Naive thymus-derived CD4-positive, alpha-beta T cell (primary cell): ENCODE measurements at regions of chr12 and their contacts with region 1.

Region 1: GRCh38 chr12:92987362-92987761 is 58.3 kb upstream of the EEA1 start:
- DNase-seq: peak in 7 of 9 donors; percentile 41 to 66 (median 56)
- ATAC-seq: peak; percentile 81
- H3K4me3 ChIP-seq: no peak overlapping the region
- H3K4me3 Mint-ChIP-seq: peak overlapping the region in 9 of 10 donors; percentile 18 to 80 (median 65)
- H3K27ac ChIP-seq: no peak overlapping the region
- H3K27ac Mint-ChIP-seq: peak overlapping the region in 5 of 9 donors; percentile 35 to 68 (median 59)
- H3K4me1 ChIP-seq: peaks cover 0 to 8% of the 10 kb centered on the region in 2 donors
- H3K4me1 Mint-ChIP-seq: peaks cover 5 to 13% (median 12%) of the 10 kb centered on the region in 7 donors
- H3K27me3 ChIP-seq: no peaks in the 10 kb centered on the region
- H3K27me3 Mint-ChIP-seq: peaks cover 0 to 5% (median 0%) of the 10 kb centered on the region in 5 donors

Region 2: GRCh38 chr12:92469837-92470236 is 517.5 kb before region 1 on chr12:
- CTCF ChIA-PET with region 1: no interaction called
- POLR2A ChIA-PET with region 1: no interaction called
- intact Hi-C with region 1: no loop called
- DNase-seq: no peak
- ATAC-seq: no peak
- H3K4me3 ChIP-seq: no peak overlapping the region
- H3K4me3 Mint-ChIP-seq: no peak overlapping the region
- H3K27ac ChIP-seq: no peak overlapping the region
- H3K27ac Mint-ChIP-seq: no peak overlapping the region
- H3K4me1 ChIP-seq: no peaks in the 10 kb centered on the region
- H3K4me1 Mint-ChIP-seq: peaks cover 4 to 22% (median 9%) of the 10 kb centered on the region in 7 donors
- H3K27me3 ChIP-seq: no peaks in the 10 kb centered on the region
- H3K27me3 Mint-ChIP-seq: no peaks in the 10 kb centered on the region

Region 3: DNA sequence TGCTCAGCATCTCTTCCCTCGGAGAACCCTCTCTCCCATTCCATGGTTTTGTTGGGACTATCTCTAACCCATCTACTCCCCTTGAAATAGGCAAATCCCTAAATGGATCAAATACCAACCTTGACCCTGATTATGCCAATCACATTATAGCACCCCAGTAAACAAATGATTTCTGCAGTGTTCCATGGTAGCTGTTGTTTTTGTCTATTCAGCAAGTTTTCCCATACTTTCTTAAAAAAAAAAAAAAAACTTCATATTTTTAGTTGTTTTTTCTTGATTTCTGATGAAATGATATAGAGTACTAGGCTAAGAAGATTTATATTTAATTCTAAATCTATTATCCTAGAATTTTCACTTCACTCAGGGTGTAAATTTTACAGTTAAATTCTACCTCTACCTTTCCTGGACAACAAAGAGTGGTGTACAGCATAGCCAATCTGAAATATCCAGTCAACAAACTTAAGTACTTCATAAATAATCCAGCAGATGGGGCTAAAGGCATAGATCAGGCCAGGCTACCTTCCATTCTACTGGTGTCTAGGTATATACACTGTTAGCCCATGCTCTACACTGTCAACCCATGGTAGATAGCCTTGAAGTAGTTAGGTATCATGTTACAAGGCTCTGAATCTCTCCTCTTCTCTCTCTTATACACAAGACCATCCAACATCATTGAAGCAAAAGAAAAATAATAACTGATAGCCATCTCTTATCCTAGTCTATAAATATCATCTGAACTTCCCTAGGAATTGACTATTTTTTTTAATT is 202.4 kb before region 1 on chr12:
- CTCF ChIA-PET with region 1: interaction called, 10 read pairs
- POLR2A ChIA-PET with region 1: no interaction called
- intact Hi-C with region 1: loop called (anchors 1 kb)
- DNase-seq: peak in 7 of 9 donors; percentile 61 to 80 (median 70)
- ATAC-seq: peak; percentile 99
- H3K4me3 ChIP-seq: no peak overlapping the region
- H3K4me3 Mint-ChIP-seq: no peak overlapping the region
- H3K27ac ChIP-seq: no peak overlapping the region
- H3K27ac Mint-ChIP-seq: peak overlapping the region in 1 of 9 donors; percentile 0
- H3K4me1 ChIP-seq: no peaks in the 10 kb centered on the region
- H3K4me1 Mint-ChIP-seq: peaks cover 4 to 19% (median 9%) of the 10 kb centered on the region in 7 donors
- H3K27me3 ChIP-seq: no peaks in the 10 kb centered on the region
- H3K27me3 Mint-ChIP-seq: no peaks in the 10 kb centered on the region

Region 4: GRCh38 chr12:92977326-92977725 is 10.0 kb before region 1 on chr12:
- CTCF ChIA-PET with region 1: interaction called, 15 read pairs
- POLR2A ChIA-PET with region 1: interaction called, 3 read pairs
- intact Hi-C with region 1: no loop called
- DNase-seq: peak in 7 of 9 donors; percentile 12 to 60 (median 52)
- ATAC-seq: peak; percentile 73
- H3K4me3 ChIP-seq: peak overlapping the region; percentile 24
- H3K4me3 Mint-ChIP-seq: peak overlapping the region; percentile 13 to 87 (median 70)
- H3K27ac ChIP-seq: peak overlapping the region; percentile 28
- H3K27ac Mint-ChIP-seq: peak overlapping the region in 8 of 9 donors; percentile 74 to 94 (median 82)
- H3K4me1 ChIP-seq: peaks cover 0 to 13% of the 10 kb centered on the region in 2 donors
- H3K4me1 Mint-ChIP-seq: peaks cover 10 to 31% (median 22%) of the 10 kb centered on the region in 7 donors
- H3K27me3 ChIP-seq: peaks cover 0 to 5% of the 10 kb centered on the region in 2 donors
- H3K27me3 Mint-ChIP-seq: peaks cover 0 to 4% (median 0%) of the 10 kb centered on the region in 5 donors

Region 5: DNA sequence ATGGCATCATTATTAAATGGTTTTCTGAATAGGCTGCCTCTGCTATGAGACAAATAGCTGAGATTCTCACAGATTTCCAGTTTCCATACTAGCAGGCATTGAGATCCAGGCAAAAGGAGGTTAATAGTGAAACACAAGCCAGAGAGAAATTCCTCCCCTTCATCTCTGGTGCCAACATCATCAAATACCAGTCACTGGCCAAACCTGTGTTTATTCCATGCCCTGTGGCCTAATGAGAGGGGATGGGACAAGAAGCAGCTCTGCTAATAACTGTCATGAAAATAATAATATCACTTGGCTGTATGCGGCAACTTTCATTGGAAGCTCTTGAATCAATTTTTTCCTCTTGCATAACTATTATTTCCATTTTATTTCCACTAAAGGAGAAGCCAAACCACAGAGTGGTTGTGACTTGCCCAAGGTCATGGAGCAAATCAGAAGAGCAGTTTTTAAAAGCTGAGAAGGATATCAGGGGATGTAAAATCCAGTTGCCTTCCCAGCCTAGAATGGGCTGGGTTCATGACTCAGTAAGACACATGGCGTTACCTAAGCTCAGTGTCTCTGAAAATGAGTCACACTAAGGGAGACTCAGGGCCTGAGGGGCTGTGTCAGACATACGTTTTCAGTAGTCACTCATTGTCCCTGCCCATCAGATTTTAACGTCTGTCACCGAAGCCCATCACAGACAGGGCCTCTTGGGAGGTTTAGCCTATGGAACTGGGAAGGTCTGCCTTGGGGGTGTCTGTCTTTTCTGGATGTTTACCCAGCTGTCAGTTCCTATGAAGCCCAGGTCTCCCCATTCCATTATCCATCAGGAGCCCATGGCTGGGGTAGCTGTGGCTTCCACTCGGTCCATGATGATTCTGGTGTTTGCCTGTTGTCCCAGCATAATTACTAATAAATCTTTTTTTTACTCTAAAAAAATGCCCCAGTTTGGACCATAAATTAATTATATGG is 150.6 kb after region 1 on chr12:
- CTCF ChIA-PET with region 1: no interaction called
- POLR2A ChIA-PET with region 1: no interaction called
- intact Hi-C with region 1: no loop called
- DNase-seq: no peak
- ATAC-seq: peak; percentile 73
- H3K4me3 ChIP-seq: no peak overlapping the region
- H3K4me3 Mint-ChIP-seq: no peak overlapping the region
- H3K27ac ChIP-seq: no peak overlapping the region
- H3K27ac Mint-ChIP-seq: no peak overlapping the region
- H3K4me1 ChIP-seq: no peaks in the 10 kb centered on the region
- H3K4me1 Mint-ChIP-seq: peaks cover 8 to 22% (median 15%) of the 10 kb centered on the region in 7 donors
- H3K27me3 ChIP-seq: no peaks in the 10 kb centered on the region
- H3K27me3 Mint-ChIP-seq: no peaks in the 10 kb centered on the region

Region 6: GRCh38 chr12:93397412-93397811 is 410.1 kb after region 1 on chr12:
- CTCF ChIA-PET with region 1: interaction called, 38 read pairs
- POLR2A ChIA-PET with region 1: interaction called, 3 read pairs
- intact Hi-C with region 1: loop called (anchors 1 kb)
- DNase-seq: no peak
- ATAC-seq: no peak
- H3K4me3 ChIP-seq: no peak overlapping the region
- H3K4me3 Mint-ChIP-seq: no peak overlapping the region
- H3K27ac ChIP-seq: no peak overlapping the region
- H3K27ac Mint-ChIP-seq: peak overlapping the region in 1 of 9 donors; percentile 25
- H3K4me1 ChIP-seq: no peaks in the 10 kb centered on the region
- H3K4me1 Mint-ChIP-seq: peaks cover 0 to 8% (median 5%) of the 10 kb centered on the region in 7 donors
- H3K27me3 ChIP-seq: no peaks in the 10 kb centered on the region
- H3K27me3 Mint-ChIP-seq: no peaks in the 10 kb centered on the region

Region 7: DNA sequence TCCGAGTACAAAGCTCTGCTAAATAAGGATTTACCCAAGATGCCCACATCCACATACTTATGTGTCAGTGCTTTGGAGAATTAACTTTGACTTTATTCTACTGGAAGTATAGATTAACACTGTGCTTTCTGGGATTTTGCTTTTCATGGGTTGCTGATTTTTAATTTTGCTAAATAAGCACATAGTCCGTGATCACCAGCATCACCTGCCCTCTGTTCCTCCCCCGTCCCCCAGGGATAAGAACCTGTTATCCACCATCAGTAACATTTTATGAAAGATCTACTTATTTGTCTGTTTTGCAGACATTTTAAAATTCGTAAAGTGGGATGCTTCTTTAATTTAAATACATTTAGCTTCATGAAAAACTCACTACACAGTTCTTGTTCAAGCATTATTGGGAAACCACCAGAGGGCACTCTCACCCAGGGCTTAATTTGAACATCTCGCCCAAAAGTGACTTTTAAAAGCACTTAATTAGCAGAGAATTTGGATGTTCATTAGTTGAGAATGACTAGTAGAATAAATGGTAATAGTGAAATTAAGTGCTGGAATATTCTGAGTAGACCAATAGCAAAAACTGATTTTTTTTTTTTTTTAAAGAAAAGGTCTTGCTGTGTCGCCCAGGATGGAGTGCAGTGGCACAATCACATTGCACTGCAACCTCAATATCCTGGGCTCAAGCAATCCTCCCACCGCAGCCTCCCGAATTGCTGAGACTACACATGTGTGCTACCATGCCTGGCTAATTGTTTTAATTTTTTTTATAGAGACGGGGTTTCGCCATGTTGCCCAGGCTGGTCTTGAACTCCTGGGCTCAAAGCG is 515.7 kb after region 1 on chr12:
- CTCF ChIA-PET with region 1: interaction called, 12 read pairs
- POLR2A ChIA-PET with region 1: no interaction called
- intact Hi-C with region 1: loop called (anchors 2 to 10 kb)
- DNase-seq: peak; percentile 16 to 71 (median 54)
- ATAC-seq: peak; percentile 67
- H3K4me3 ChIP-seq: no peak overlapping the region
- H3K4me3 Mint-ChIP-seq: no peak overlapping the region
- H3K27ac ChIP-seq: no peak overlapping the region
- H3K27ac Mint-ChIP-seq: peak overlapping the region in 3 of 9 donors; percentile 36 to 69 (median 60)
- H3K4me1 ChIP-seq: no peaks in the 10 kb centered on the region
- H3K4me1 Mint-ChIP-seq: peaks cover 0 to 29% (median 0%) of the 10 kb centered on the region in 7 donors
- H3K27me3 ChIP-seq: no peaks in the 10 kb centered on the region
- H3K27me3 Mint-ChIP-seq: no peaks in the 10 kb centered on the region